Endothelial cell of umbilical vein (primary cell): ENCODE measurements at regions of chr6 and their contacts with region 1.

Region 1: GRCh38 chr6:139644821-139645220 is 270.4 kb upstream of the CITED2 start:
- DNase-seq: no peak
- H3K4me3 ChIP-seq: no peak overlapping the region
- H3K27ac ChIP-seq: no peak overlapping the region
- H3K4me1 ChIP-seq: no peaks in the 10 kb centered on the region
- H3K27me3 ChIP-seq: no peaks in the 10 kb centered on the region
- CTCF ChIP-seq: no peak
- POLR2A ChIP-seq: no peak

Region 2: DNA sequence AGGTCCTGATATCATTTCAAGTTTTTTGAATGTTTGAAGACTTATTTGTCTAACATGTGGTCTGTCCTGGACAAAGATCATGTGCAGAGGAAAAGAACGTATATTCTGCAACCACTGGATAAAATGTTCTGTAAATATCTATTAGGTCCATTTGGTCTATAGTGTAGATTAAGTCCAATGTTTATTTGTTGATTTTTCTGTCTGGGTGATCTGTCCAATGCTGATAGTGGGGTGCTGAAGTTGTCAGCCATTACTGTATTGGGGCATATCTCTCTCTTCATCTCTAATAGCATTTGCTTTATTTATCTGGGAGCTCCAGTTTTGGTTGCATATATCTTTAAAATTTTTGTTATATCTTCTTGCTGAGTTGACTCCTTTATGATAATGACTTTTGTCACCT is 12.0 kb before region 1 on chr6:
- CTCF ChIA-PET with region 1: no interaction called
- POLR2A ChIA-PET with region 1: no interaction called
- dilution Hi-C with region 1: no loop called
- intact Hi-C with region 1: no loop called
- DNase-seq: no peak
- H3K4me3 ChIP-seq: no peak overlapping the region
- H3K27ac ChIP-seq: no peak overlapping the region
- H3K4me1 ChIP-seq: no peaks in the 10 kb centered on the region
- H3K27me3 ChIP-seq: no peaks in the 10 kb centered on the region
- CTCF ChIP-seq: no peak
- POLR2A ChIP-seq: no peak

Region 3: GRCh38 chr6:139659711-139660110 is 14.9 kb after region 1 on chr6:
- CTCF ChIA-PET with region 1: no interaction called
- POLR2A ChIA-PET with region 1: no interaction called
- dilution Hi-C with region 1: no loop called
- intact Hi-C with region 1: loop called (anchors 1 kb)
- DNase-seq: no peak
- H3K4me3 ChIP-seq: no peak overlapping the region
- H3K27ac ChIP-seq: no peak overlapping the region
- H3K4me1 ChIP-seq: no peaks in the 10 kb centered on the region
- H3K27me3 ChIP-seq: no peaks in the 10 kb centered on the region
- CTCF ChIP-seq: no peak
- POLR2A ChIP-seq: no peak

Region 4: DNA sequence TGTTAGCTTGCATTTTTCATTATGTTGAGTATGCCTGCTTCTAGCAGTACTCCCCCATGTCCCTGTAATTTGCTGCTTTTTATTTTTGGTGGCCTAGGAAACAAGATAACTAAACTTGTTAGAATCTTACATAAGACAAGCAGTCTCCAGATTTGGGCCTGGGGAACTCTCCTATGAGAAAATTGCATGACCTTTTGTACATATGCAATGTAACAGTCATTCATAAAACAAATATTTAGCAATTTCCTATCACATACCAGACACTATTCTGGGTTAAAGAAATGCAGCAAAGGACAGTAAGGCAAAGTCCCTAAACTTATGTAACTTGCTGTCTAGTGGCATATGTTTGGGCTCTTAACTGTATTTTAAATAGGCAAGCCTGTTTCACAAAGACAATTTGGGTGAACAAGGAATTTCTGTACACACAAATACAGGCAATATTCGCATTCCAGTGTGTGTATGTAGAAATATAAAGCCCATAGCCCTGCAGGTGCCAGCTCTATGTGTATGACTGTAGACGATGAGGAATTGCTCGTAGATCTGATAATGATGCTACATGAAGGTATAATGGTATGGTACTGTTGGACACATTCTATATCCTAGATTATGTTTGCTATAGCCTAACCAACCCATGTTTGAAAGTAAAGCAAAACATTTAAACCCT is 34.8 kb after region 1 on chr6:
- CTCF ChIA-PET with region 1: no interaction called
- POLR2A ChIA-PET with region 1: no interaction called
- dilution Hi-C with region 1: no loop called
- intact Hi-C with region 1: no loop called
- DNase-seq: peak; percentile 35
- H3K4me3 ChIP-seq: no peak overlapping the region
- H3K27ac ChIP-seq: no peak overlapping the region
- H3K4me1 ChIP-seq: no peaks in the 10 kb centered on the region
- H3K27me3 ChIP-seq: no peaks in the 10 kb centered on the region
- CTCF ChIP-seq: no peak
- POLR2A ChIP-seq: no peak

Region 5: DNA sequence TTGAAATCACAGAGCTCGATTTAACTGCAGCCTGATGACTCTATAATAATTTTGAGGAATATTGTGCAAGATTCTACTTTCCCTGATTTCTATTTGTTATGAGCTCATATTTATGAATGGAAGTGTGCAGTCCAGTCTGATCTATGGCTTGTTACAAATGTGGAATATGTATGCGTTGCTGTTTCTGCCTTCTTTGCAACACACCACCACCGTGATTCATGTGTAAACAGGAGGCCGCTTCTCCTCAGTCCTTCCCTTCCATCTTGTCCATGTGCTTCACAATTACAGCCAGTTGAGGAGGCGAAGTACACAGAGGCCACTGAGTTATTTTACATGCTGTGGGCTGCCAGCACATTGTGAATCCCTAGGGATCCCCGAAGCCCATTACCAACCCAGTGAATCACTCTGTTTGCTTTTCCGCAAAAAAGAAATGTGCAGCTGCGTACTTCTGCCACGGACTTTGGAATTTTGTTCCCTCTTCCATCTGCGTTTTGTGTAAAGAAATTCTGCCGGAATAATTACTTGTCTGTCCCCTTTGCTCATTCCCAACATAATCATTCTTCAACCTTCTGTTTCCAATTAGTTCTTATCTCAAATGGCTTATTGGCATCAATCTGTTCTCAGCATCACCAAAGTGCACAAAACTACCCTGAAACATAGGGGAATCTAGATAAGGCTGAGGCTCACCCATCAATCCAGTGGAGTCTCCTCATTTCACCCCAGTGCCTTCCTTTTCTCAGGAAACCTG is 281.2 kb after region 1 on chr6:
- CTCF ChIA-PET with region 1: no interaction called
- POLR2A ChIA-PET with region 1: no interaction called
- dilution Hi-C with region 1: no loop called
- intact Hi-C with region 1: no loop called
- DNase-seq: no peak
- H3K4me3 ChIP-seq: no peak overlapping the region
- H3K27ac ChIP-seq: no peak overlapping the region
- H3K4me1 ChIP-seq: no peaks in the 10 kb centered on the region
- H3K27me3 ChIP-seq: no peaks in the 10 kb centered on the region
- CTCF ChIP-seq: no peak
- POLR2A ChIP-seq: no peak